CD4-positive, alpha-beta memory T cell (primary cell): ENCODE measurements at regions of chr16 and their contacts with region 1.

Region 1: GRCh38 chr16:78503602-78504001 is 404.1 kb downstream of the WWOX start:
- DNase-seq: peak; percentile 41 to 54 (median 48)
- H3K4me3 ChIP-seq: no peak overlapping the region
- H3K4me3 Mint-ChIP-seq: no peak overlapping the region
- H3K27ac ChIP-seq: no peak overlapping the region
- H3K27ac Mint-ChIP-seq: no peak overlapping the region
- H3K4me1 ChIP-seq: no peaks in the 10 kb centered on the region
- H3K4me1 Mint-ChIP-seq: no peaks in the 10 kb centered on the region
- H3K27me3 ChIP-seq: no peaks in the 10 kb centered on the region
- H3K27me3 Mint-ChIP-seq: no peaks in the 10 kb centered on the region

Region 2: DNA sequence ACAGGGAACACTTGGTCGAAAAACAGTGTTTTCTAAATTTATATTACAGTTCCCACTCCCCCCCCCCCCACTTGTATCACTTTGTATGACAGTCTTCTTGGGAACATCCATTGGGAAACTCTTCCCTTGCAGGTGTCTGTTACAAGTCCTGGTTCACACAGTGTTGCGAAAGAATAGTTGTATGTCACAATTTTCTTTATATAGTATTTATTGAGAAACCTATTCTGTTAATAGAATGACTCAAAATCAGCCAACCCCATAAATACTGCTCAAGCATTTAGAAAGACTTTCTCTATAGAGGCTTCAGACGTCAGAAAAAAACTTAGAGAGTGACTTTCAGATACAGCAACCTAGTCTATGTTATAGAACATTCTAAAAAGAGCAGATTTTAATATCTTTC is 10.2 kb after region 1 on chr16:
- CTCF ChIA-PET with region 1: interaction called, 14 read pairs
- POLR2A ChIA-PET with region 1: no interaction called
- intact Hi-C with region 1: no loop called
- DNase-seq: no peak
- H3K4me3 ChIP-seq: no peak overlapping the region
- H3K4me3 Mint-ChIP-seq: no peak overlapping the region
- H3K27ac ChIP-seq: no peak overlapping the region
- H3K27ac Mint-ChIP-seq: no peak overlapping the region
- H3K4me1 ChIP-seq: no peaks in the 10 kb centered on the region
- H3K4me1 Mint-ChIP-seq: no peaks in the 10 kb centered on the region
- H3K27me3 ChIP-seq: no peaks in the 10 kb centered on the region
- H3K27me3 Mint-ChIP-seq: no peaks in the 10 kb centered on the region

Region 3: GRCh38 chr16:78639775-78640174 is 136.2 kb after region 1 on chr16:
- CTCF ChIA-PET with region 1: no interaction called
- POLR2A ChIA-PET with region 1: no interaction called
- intact Hi-C with region 1: no loop called
- DNase-seq: no peak
- H3K4me3 ChIP-seq: no peak overlapping the region
- H3K4me3 Mint-ChIP-seq: no peak overlapping the region
- H3K27ac ChIP-seq: no peak overlapping the region
- H3K27ac Mint-ChIP-seq: no peak overlapping the region
- H3K4me1 ChIP-seq: no peaks in the 10 kb centered on the region
- H3K4me1 Mint-ChIP-seq: no peaks in the 10 kb centered on the region
- H3K27me3 ChIP-seq: no peaks in the 10 kb centered on the region
- H3K27me3 Mint-ChIP-seq: peaks cover 0 to 1% of the 10 kb centered on the region in 2 donors

Region 4: DNA sequence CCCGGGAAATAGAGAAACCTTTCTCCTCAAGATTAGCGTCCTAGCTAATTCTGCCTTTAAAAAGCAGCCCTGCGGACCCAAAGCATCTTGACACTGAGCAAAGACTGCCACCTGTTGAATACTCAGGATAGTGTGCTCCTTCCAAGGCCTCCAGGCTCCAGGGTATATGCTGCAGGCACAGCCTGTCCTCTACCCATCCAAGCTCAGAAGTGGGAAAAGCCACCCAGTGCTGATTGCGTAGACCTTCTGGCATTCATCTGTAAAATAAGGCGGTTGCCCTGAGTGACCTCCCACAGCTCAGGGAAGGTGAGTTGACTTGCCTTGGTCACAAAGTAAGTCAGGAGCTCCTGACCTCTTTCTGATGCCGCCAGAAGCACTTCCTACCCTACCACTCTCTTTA is 1581.1 kb after region 1 on chr16:
- CTCF ChIA-PET with region 1: interaction called, 3 read pairs
- POLR2A ChIA-PET with region 1: no interaction called
- intact Hi-C with region 1: loop called (anchors 2 kb)
- DNase-seq: peak in 3 of 5 donors; percentile 9 to 38 (median 16)
- H3K4me3 ChIP-seq: no peak overlapping the region
- H3K4me3 Mint-ChIP-seq: no peak overlapping the region
- H3K27ac ChIP-seq: no peak overlapping the region
- H3K27ac Mint-ChIP-seq: no peak overlapping the region
- H3K4me1 ChIP-seq: no peaks in the 10 kb centered on the region
- H3K4me1 Mint-ChIP-seq: no peaks in the 10 kb centered on the region
- H3K27me3 ChIP-seq: no peaks in the 10 kb centered on the region
- H3K27me3 Mint-ChIP-seq: peaks cover 0 to 1% of the 10 kb centered on the region in 2 donors

Region 5: GRCh38 chr16:80466024-80466987 is 1962.7 kb after region 1 on chr16:
- CTCF ChIA-PET with region 1: no interaction called
- POLR2A ChIA-PET with region 1: no interaction called
- intact Hi-C with region 1: loop called (anchors 2 kb)
- DNase-seq: peak; percentile 32 to 57 (median 53)
- H3K4me3 ChIP-seq: no peak overlapping the region
- H3K4me3 Mint-ChIP-seq: peak overlapping the region in 1 of 8 donors; percentile 18
- H3K27ac ChIP-seq: no peak overlapping the region
- H3K27ac Mint-ChIP-seq: no peak overlapping the region
- H3K4me1 ChIP-seq: peaks cover 5% of the 10 kb centered on the region
- H3K4me1 Mint-ChIP-seq: peaks cover 0 to 4% (median 4%) of the 10 kb centered on the region in 4 donors
- H3K27me3 ChIP-seq: no peaks in the 10 kb centered on the region
- H3K27me3 Mint-ChIP-seq: peaks cover 13 to 20% of the 10 kb centered on the region in 2 donors